CD8-positive, alpha-beta memory T cell (primary cell): ENCODE measurements at regions of chr2 and their contacts with region 1.

Region 1: GRCh38 chr2:223970343-223971128 is 13.3 kb downstream of the MRPL44 start:
- DNase-seq: peak; percentile 26 to 54 (median 35)
- H3K4me3 ChIP-seq: no peak overlapping the region
- H3K4me3 Mint-ChIP-seq: no peak overlapping the region
- H3K27ac ChIP-seq: no peak overlapping the region
- H3K27ac Mint-ChIP-seq: peak overlapping the region in 1 of 8 donors; percentile 64
- H3K4me1 ChIP-seq: no peaks in the 10 kb centered on the region
- H3K4me1 Mint-ChIP-seq: peaks cover 3 to 16% (median 5%) of the 10 kb centered on the region in 3 donors
- H3K27me3 ChIP-seq: no peaks in the 10 kb centered on the region
- H3K27me3 Mint-ChIP-seq: no peaks in the 10 kb centered on the region

Region 2: DNA sequence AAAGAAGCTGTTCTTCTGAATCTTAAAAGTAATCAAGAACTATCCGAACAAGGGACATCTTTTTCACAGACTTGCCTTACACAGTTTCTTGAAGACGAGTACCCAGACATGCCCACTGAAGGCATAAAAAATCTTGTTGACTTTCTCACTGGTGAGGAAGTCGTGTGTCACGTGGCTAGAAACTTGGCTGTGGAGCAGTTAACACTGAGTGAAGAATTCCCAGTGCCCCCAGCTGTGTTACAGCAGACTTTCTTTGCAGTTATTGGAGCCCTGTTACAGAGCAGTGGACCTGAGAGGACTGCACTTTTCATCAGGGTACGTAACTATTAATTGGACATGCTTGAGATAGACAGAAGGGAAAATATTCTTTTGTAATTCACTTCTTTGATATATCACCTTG is 10.8 kb before region 1 on chr2:
- CTCF ChIA-PET with region 1: interaction called, 22 read pairs
- POLR2A ChIA-PET with region 1: interaction called, 3 read pairs
- DNase-seq: no peak
- H3K4me3 ChIP-seq: peak overlapping the region; percentile 6
- H3K4me3 Mint-ChIP-seq: peak overlapping the region in 6 of 7 donors; percentile 20 to 77 (median 62)
- H3K27ac ChIP-seq: no peak overlapping the region
- H3K27ac Mint-ChIP-seq: peak overlapping the region in 4 of 8 donors; percentile 40 to 76 (median 45)
- H3K4me1 ChIP-seq: peaks cover 56% of the 10 kb centered on the region
- H3K4me1 Mint-ChIP-seq: peaks cover 58 to 77% (median 70%) of the 10 kb centered on the region in 3 donors
- H3K27me3 ChIP-seq: no peaks in the 10 kb centered on the region
- H3K27me3 Mint-ChIP-seq: peaks cover 0 to 6% of the 10 kb centered on the region in 2 donors

Region 3: GRCh38 chr2:224284134-224284946 is 313.8 kb after region 1 on chr2:
- CTCF ChIA-PET with region 1: interaction called, 40 read pairs
- POLR2A ChIA-PET with region 1: no interaction called
- DNase-seq: peak in 2 of 5 donors; percentile 13 to 40
- H3K4me3 ChIP-seq: no peak overlapping the region
- H3K4me3 Mint-ChIP-seq: no peak overlapping the region
- H3K27ac ChIP-seq: no peak overlapping the region
- H3K27ac Mint-ChIP-seq: no peak overlapping the region
- H3K4me1 ChIP-seq: no peaks in the 10 kb centered on the region
- H3K4me1 Mint-ChIP-seq: no peaks in the 10 kb centered on the region
- H3K27me3 ChIP-seq: no peaks in the 10 kb centered on the region
- H3K27me3 Mint-ChIP-seq: peaks cover 5 to 63% of the 10 kb centered on the region in 2 donors